CD8-positive, alpha-beta T cell (primary cell): ENCODE measurements at regions of chr22 and their contacts with region 1.

Region 1: GRCh38 chr22:50620593-50621355 is 7.2 kb downstream of the ARSA start:
- DNase-seq: peak; percentile 80 to 97 (median 91)
- ATAC-seq: peak; percentile 72
- H3K4me3 ChIP-seq: peak overlapping the region; percentile 41 to 50
- H3K4me3 Mint-ChIP-seq: peak overlapping the region; percentile 82
- H3K27ac ChIP-seq: peak overlapping the region; percentile 91
- H3K27ac Mint-ChIP-seq: peak overlapping the region; percentile 100
- H3K4me1 ChIP-seq: peaks cover 28% of the 10 kb centered on the region
- H3K4me1 Mint-ChIP-seq: peaks cover 34% of the 10 kb centered on the region
- H3K27me3 ChIP-seq: no peaks in the 10 kb centered on the region
- H3K27me3 Mint-ChIP-seq: no peaks in the 10 kb centered on the region
- CTCF ChIP-seq: no peak

Region 2: GRCh38 chr22:50185384-50186087 is 435.2 kb before region 1 on chr22 and contains the start of gene TRABD:
- CTCF ChIA-PET with region 1: no interaction called
- POLR2A ChIA-PET with region 1: interaction called, 10 read pairs
- intact Hi-C with region 1: no loop called
- DNase-seq: peak; percentile 79 to 95 (median 87)
- ATAC-seq: peak; percentile 69
- H3K4me3 ChIP-seq: peak within 1 kb of the TSS; percentile 58 to 70
- H3K4me3 Mint-ChIP-seq: peak within 1 kb of the TSS; percentile 93
- H3K27ac ChIP-seq: peak within 1 kb of the TSS; percentile 45 to 71
- H3K27ac Mint-ChIP-seq: peak within 1 kb of the TSS; percentile 93
- H3K4me1 ChIP-seq: peaks cover 40% of the 10 kb centered on the region
- H3K4me1 Mint-ChIP-seq: peaks cover 32% of the 10 kb centered on the region
- H3K27me3 ChIP-seq: no peaks in the 10 kb centered on the region
- H3K27me3 Mint-ChIP-seq: peaks cover 2% of the 10 kb centered on the region
- CTCF ChIP-seq: no peak
- total RNA-seq, gene TRABD: 178 to 187 TPM

Region 3: DNA sequence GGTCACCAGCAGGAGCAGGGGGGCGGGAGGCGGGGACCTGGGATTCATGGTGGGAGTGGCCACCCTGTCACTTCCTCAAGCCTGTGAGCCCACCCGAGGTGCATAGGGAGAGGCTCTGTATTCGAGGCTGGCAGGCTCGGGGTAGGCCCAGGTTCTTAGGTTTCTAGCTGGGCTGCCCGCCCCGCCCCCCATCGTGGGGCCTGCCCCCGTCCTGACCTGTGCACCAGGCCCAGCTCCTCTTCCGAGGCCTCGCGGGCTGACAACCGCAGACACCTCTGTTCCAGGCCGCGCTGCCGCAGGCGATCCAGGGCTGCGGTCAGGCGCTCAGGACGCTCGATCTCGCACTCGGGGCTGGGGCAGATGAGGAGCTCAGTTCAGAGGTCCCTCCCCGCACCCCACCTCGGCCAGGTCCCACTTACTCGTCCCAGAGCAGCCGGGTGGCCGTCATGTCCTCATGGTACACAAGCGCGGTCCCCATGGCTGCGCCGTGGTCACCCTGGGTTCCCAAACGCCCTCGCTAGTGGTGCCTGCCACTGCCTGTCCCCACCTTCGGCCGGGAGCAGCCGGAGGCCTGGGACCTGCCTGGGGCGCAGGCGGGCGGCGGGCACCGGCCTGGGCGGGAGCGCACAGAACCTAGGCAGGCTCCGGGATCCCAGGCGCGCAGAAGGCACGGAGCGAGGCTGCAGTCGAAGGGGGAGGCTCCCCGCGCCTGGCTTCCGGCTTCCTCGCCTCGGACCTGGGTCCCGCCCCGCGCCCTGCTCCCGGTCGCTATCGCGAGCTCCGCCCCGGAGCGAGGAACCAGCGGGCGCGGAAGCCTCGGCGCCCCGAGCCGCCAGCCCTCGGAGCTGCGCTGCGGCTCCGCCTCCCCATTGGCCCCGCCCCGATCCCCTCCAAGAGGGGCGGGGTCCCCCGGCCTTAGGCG is 370.0 kb before region 1 on chr22 and contains the start of gene HDAC10:
- CTCF ChIA-PET with region 1: interaction called, 12 read pairs
- POLR2A ChIA-PET with region 1: interaction called, 12 read pairs
- intact Hi-C with region 1: loop called in 1 of 2 experiments (anchors 2 kb)
- DNase-seq: peak; percentile 38 to 90 (median 77)
- ATAC-seq: peak; percentile 72
- H3K4me3 ChIP-seq: peak within 1 kb of the TSS; percentile 77 to 89
- H3K4me3 Mint-ChIP-seq: peak within 1 kb of the TSS; percentile 81
- H3K27ac ChIP-seq: peak within 1 kb of the TSS; percentile 58 to 67
- H3K27ac Mint-ChIP-seq: no peak within 1 kb of the TSS
- H3K4me1 ChIP-seq: peaks cover 36% of the 10 kb centered on the region
- H3K4me1 Mint-ChIP-seq: peaks cover 22% of the 10 kb centered on the region
- H3K27me3 ChIP-seq: no peaks in the 10 kb centered on the region
- H3K27me3 Mint-ChIP-seq: no peaks in the 10 kb centered on the region
- CTCF ChIP-seq: no peak
- total RNA-seq, gene HDAC10: 81.8 to 82.6 TPM

Region 4: GRCh38 chr22:50360578-50360977 is 260.2 kb before region 1 on chr22:
- CTCF ChIA-PET with region 1: no interaction called
- POLR2A ChIA-PET with region 1: no interaction called
- intact Hi-C with region 1: no loop called
- DNase-seq: no peak
- ATAC-seq: no peak
- H3K4me3 ChIP-seq: no peak overlapping the region
- H3K4me3 Mint-ChIP-seq: no peak overlapping the region
- H3K27ac ChIP-seq: peak overlapping the region in 1 of 2 experiments; percentile 58
- H3K27ac Mint-ChIP-seq: peak overlapping the region; percentile 91
- H3K4me1 ChIP-seq: peaks cover 31% of the 10 kb centered on the region
- H3K4me1 Mint-ChIP-seq: peaks cover 56% of the 10 kb centered on the region
- H3K27me3 ChIP-seq: no peaks in the 10 kb centered on the region
- H3K27me3 Mint-ChIP-seq: no peaks in the 10 kb centered on the region
- CTCF ChIP-seq: no peak

Region 5: GRCh38 chr22:50469377-50470305 is 151.1 kb before region 1 on chr22:
- CTCF ChIA-PET with region 1: interaction called, 4 read pairs
- POLR2A ChIA-PET with region 1: interaction called, 7 read pairs
- intact Hi-C with region 1: loop called (anchors 1 to 2 kb)
- DNase-seq: peak; percentile 94 to 100 (median 99)
- ATAC-seq: peak; percentile 85
- H3K4me3 ChIP-seq: peak overlapping the region; percentile 50 to 79
- H3K4me3 Mint-ChIP-seq: peak overlapping the region; percentile 75
- H3K27ac ChIP-seq: peak overlapping the region; percentile 81 to 82
- H3K27ac Mint-ChIP-seq: peak overlapping the region; percentile 96
- H3K4me1 ChIP-seq: peaks cover 79% of the 10 kb centered on the region
- H3K4me1 Mint-ChIP-seq: peaks cover 76% of the 10 kb centered on the region
- H3K27me3 ChIP-seq: no peaks in the 10 kb centered on the region
- H3K27me3 Mint-ChIP-seq: no peaks in the 10 kb centered on the region
- CTCF ChIP-seq: peak; percentile 23

Region 6: DNA sequence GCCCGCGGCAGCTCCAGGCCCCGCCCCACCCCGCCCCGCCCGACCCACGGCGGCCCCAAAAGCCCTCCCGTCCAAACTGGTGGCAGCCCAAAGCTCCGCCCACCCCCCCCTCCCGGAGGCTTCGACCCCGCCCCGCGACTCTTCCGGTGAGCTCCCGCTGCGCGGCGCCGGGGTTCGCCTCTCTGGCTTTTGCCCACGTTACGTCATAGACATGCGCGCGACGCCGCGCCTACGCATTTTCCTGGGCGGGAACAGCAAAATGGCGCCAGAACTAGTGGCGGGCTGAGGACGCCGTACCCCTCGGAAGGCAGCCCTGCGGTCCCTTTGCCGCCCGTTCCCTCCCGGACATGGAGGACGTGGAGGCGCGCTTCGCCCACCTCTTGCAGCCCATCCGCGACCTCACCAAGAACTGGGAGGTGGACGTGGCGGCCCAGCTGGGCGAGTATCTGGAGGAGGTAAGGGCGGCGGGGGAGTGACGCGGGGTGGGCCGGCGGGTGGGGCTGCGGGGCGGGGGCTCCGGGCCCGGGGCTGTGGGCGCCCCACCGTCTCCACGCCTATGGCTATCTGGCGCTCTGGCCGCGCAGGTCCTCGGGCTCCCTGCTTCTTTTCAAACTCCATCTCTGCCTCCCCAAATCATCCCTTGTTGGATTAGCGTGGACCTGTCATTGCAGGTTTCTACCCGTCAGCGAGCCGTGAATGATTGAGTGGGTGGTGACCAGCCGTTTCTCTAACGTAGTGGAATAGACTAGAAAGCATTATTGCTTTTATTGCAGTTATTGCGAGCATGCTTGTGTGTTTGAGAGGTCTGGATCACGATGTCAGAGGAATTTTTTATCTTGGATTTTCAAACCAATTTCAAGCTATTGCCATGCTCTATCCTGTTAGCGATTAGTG is 112.5 kb before region 1 on chr22 and contains the start of gene NCAPH2:
- CTCF ChIA-PET with region 1: interaction called, 5 read pairs
- POLR2A ChIA-PET with region 1: interaction called, 21 read pairs
- intact Hi-C with region 1: loop called in 1 of 2 experiments (anchors 1 kb)
- DNase-seq: peak in 8 of 9 experiments; percentile 94 to 99 (median 98)
- ATAC-seq: peak; percentile 74
- H3K4me3 ChIP-seq: peak within 1 kb of the TSS; percentile 88 to 97
- H3K4me3 Mint-ChIP-seq: peak within 1 kb of the TSS; percentile 96
- H3K27ac ChIP-seq: peak within 1 kb of the TSS; percentile 93
- H3K27ac Mint-ChIP-seq: peak within 1 kb of the TSS; percentile 99
- H3K4me1 ChIP-seq: peaks cover 23% of the 10 kb centered on the region
- H3K4me1 Mint-ChIP-seq: peaks cover 26% of the 10 kb centered on the region
- H3K27me3 ChIP-seq: no peaks in the 10 kb centered on the region
- H3K27me3 Mint-ChIP-seq: no peaks in the 10 kb centered on the region
- CTCF ChIP-seq: no peak
- total RNA-seq, gene NCAPH2: 206 to 209 TPM

Region 7: DNA sequence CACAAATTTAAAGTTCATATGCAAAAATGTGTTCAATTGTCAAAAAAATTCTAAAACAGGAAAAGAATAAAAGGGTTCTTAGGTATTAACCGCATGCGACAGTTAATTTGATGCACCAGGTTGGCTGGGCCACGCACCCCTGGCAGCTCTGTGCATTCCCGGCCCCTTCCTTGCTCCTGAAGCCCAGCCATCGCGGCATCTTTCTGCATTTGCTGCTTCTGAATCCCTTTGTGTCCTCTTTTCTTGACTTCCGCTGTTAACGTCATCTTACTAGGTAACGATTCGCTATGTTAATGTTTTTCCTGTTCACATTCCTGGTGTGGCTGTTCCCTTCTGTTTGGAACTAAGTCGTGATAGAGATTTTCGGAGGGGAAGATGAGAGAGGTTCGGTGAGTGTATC is 83.0 kb before region 1 on chr22:
- CTCF ChIA-PET with region 1: no interaction called
- POLR2A ChIA-PET with region 1: interaction called, 29 read pairs
- intact Hi-C with region 1: no loop called
- DNase-seq: no peak
- ATAC-seq: no peak
- H3K4me3 ChIP-seq: no peak overlapping the region
- H3K4me3 Mint-ChIP-seq: peak overlapping the region; percentile 8
- H3K27ac ChIP-seq: peak overlapping the region in 1 of 2 experiments; percentile 97
- H3K27ac Mint-ChIP-seq: peak overlapping the region; percentile 35
- H3K4me1 ChIP-seq: peaks cover 17% of the 10 kb centered on the region
- H3K4me1 Mint-ChIP-seq: peaks cover 28% of the 10 kb centered on the region
- H3K27me3 ChIP-seq: no peaks in the 10 kb centered on the region
- H3K27me3 Mint-ChIP-seq: peaks cover 4% of the 10 kb centered on the region
- CTCF ChIP-seq: no peak

Region 8: GRCh38 chr22:50582562-50583293 is 38.0 kb before region 1 on chr22 and contains the start of gene CHKB:
- CTCF ChIA-PET with region 1: interaction called, 3 read pairs
- POLR2A ChIA-PET with region 1: interaction called, 18 read pairs
- intact Hi-C with region 1: loop called (anchors 1 kb)
- DNase-seq: peak; percentile 95 to 99 (median 98)
- ATAC-seq: peak; percentile 94
- H3K4me3 ChIP-seq: peak within 1 kb of the TSS; percentile 77 to 78
- H3K4me3 Mint-ChIP-seq: peak within 1 kb of the TSS; percentile 93
- H3K27ac ChIP-seq: peak within 1 kb of the TSS; percentile 93 to 94
- H3K27ac Mint-ChIP-seq: peak within 1 kb of the TSS; percentile 97
- H3K4me1 ChIP-seq: peaks cover 16% of the 10 kb centered on the region
- H3K4me1 Mint-ChIP-seq: peaks cover 30% of the 10 kb centered on the region
- H3K27me3 ChIP-seq: no peaks in the 10 kb centered on the region
- H3K27me3 Mint-ChIP-seq: no peaks in the 10 kb centered on the region
- CTCF ChIP-seq: no peak
- total RNA-seq, gene CHKB: 112 to 115 TPM

Region 9: GRCh38 chr22:50599786-50600455 is 20.9 kb before region 1 on chr22:
- CTCF ChIA-PET with region 1: no interaction called
- POLR2A ChIA-PET with region 1: no interaction called
- intact Hi-C with region 1: no loop called
- DNase-seq: peak; percentile 46 to 76 (median 68)
- ATAC-seq: peak; percentile 99
- H3K4me3 ChIP-seq: no peak overlapping the region
- H3K4me3 Mint-ChIP-seq: peak overlapping the region; percentile 56
- H3K27ac ChIP-seq: no peak overlapping the region
- H3K27ac Mint-ChIP-seq: no peak overlapping the region
- H3K4me1 ChIP-seq: no peaks in the 10 kb centered on the region
- H3K4me1 Mint-ChIP-seq: peaks cover 13% of the 10 kb centered on the region
- H3K27me3 ChIP-seq: peaks cover 13 to 32% of the 10 kb centered on the region in 2 experiments
- H3K27me3 Mint-ChIP-seq: peaks cover 31% of the 10 kb centered on the region
- CTCF ChIP-seq: no peak

Region 10: GRCh38 chr22:50691521-50691920 is 70.7 kb after region 1 on chr22:
- CTCF ChIA-PET with region 1: no interaction called
- POLR2A ChIA-PET with region 1: no interaction called
- intact Hi-C with region 1: no loop called
- DNase-seq: peak in 4 of 9 experiments; percentile 27 to 63 (median 42)
- ATAC-seq: no peak
- H3K4me3 ChIP-seq: no peak overlapping the region
- H3K4me3 Mint-ChIP-seq: no peak overlapping the region
- H3K27ac ChIP-seq: no peak overlapping the region
- H3K27ac Mint-ChIP-seq: no peak overlapping the region
- H3K4me1 ChIP-seq: no peaks in the 10 kb centered on the region
- H3K4me1 Mint-ChIP-seq: no peaks in the 10 kb centered on the region
- H3K27me3 ChIP-seq: peaks cover 0 to 2% of the 10 kb centered on the region in 2 experiments
- H3K27me3 Mint-ChIP-seq: peaks cover 4% of the 10 kb centered on the region
- CTCF ChIP-seq: peak; percentile 42